ENCODE measurements at regions of chr7 and their contacts with region 1.

Region 1: GRCh38 chr7:88254716-88255115 is 34.9 kb upstream of the SRI start:
- DNase-seq: peak; percentile 84
- H3K4me3 Mint-ChIP-seq: no peak overlapping the region
- H3K27ac Mint-ChIP-seq: peak overlapping the region; percentile 50
- H3K4me1 Mint-ChIP-seq: peaks cover 44% of the 10 kb centered on the region
- H3K27me3 Mint-ChIP-seq: no peaks in the 10 kb centered on the region
- CTCF ChIP-seq: no peak

Region 2: DNA sequence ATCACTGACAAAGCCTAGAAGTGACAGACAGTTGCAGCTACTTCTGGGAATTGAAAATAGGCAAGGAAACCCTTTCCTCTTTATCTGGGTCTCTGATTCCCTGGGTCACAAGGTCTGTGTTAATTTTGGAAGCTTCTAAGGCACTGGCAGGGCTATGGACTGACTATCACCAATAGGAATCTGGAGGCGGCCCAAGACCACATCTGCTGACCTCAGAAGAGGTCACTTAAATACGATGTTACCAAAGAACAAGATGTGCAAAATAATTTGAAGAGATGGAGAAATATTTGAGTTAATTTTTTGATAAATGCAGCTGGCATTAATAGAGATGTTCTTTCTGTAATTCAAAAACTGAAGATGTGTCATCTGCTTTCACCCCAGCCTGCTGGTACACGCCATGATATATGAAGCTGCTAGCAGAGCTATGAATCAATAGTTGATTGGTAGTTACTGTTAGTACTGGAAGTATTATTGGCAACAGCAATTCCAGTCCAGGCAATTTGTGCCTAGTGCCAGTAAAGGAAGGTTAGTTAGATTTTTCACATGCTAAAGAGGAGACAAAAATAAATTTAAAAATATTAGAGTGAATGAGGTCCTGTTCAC is 57.4 kb after region 1 on chr7:
- CTCF ChIA-PET with region 1: no interaction called
- POLR2A ChIA-PET with region 1: interaction called, 3 read pairs
- intact Hi-C with region 1: loop called (anchors 10 kb)
- DNase-seq: no peak
- H3K4me3 Mint-ChIP-seq: no peak overlapping the region
- H3K27ac Mint-ChIP-seq: peak overlapping the region; percentile 58
- H3K4me1 Mint-ChIP-seq: peaks cover 12% of the 10 kb centered on the region
- H3K27me3 Mint-ChIP-seq: no peaks in the 10 kb centered on the region
- CTCF ChIP-seq: no peak

Measured in MCF 10A (cell line).